ENCODE measurements at regions of chr12 and their contacts with region 1.

Region 1: GRCh38 chr12:69254046-69254445 is 14.7 kb downstream of the CPSF6 start:
- DNase-seq: peak; percentile 49

Region 2: GRCh38 chr12:68871921-68872320 is 382.1 kb before region 1 on chr12:
- in situ Hi-C with region 1: loop called (anchors 25 kb)
- DNase-seq: no peak

Measured in Caki2 (cell line).